ENCODE measurements at regions of chr4 and their contacts with region 1.

Region 1: GRCh38 chr4:174365018-174365587 is 81.4 kb downstream of the CEP44 start:
- DNase-seq: no peak
- H3K4me3 ChIP-seq: no peak overlapping the region
- H3K27ac ChIP-seq: no peak overlapping the region
- H3K4me1 ChIP-seq: no peaks in the 10 kb centered on the region
- H3K27me3 ChIP-seq: no peaks in the 10 kb centered on the region
- CTCF ChIP-seq: peak; percentile 46 to 62 (median 54)
- EP300 ChIP-seq: no peak
- POLR2A ChIP-seq: no peak

Region 2: GRCh38 chr4:173924561-173924960 is 440.5 kb before region 1 on chr4:
- in situ Hi-C with region 1: no loop called
- intact Hi-C with region 1: no loop called
- DNase-seq: no peak
- H3K4me3 ChIP-seq: no peak overlapping the region
- H3K27ac ChIP-seq: peak overlapping the region in 3 of 4 donors; percentile 31 to 64 (median 58)
- H3K4me1 ChIP-seq: peaks cover 0 to 10% (median 5%) of the 10 kb centered on the region in 4 donors
- H3K27me3 ChIP-seq: no peaks in the 10 kb centered on the region
- CTCF ChIP-seq: no peak
- EP300 ChIP-seq: no peak
- POLR2A ChIP-seq: no peak

Region 3: DNA sequence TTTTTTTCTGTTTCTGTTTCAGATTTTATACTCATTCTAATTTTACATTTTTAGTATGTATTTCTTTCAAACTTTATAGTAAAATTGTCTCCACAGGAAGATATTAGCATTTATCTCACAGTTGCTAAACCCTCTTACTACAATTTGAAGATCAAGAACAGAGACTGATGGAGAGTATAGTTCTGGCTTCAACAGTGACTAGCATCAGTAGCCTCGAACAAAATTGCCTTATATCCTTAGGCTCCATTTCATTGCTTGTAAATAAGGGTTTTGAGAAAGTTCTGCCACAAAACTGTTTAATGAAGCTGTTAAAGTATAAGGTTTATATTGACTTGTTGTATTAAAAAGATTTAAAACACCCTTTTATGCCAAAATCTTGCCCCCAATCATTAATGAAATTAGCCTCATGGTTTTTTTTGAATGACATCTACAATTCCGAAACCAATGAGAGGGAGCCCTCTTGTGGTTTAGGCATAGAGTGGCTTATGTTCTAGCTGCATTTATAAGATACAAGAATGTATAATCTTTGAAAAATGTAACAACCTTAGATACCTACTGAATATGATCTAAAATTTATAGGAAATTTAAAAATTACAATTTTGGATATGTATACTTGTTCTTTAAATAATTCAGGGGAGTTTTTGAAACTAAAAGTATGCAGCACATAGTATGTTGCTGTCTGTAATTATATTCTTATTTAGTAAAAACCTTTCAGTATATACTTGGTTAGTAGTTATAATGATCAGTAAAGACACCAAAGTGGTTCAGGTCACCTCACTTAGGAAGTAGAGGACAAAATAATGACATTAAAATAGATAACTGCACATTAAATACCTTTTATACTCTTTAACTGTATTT is 267.0 kb after region 1 on chr4:
- in situ Hi-C with region 1: loop called (anchors 5 to 10 kb)
- intact Hi-C with region 1: loop called (anchors 10 kb)
- DNase-seq: no peak
- H3K4me3 ChIP-seq: no peak overlapping the region
- H3K27ac ChIP-seq: no peak overlapping the region
- H3K4me1 ChIP-seq: peaks cover 0 to 11% (median 2%) of the 10 kb centered on the region in 4 donors
- H3K27me3 ChIP-seq: no peaks in the 10 kb centered on the region
- CTCF ChIP-seq: peak; percentile 72 to 82 (median 76)
- EP300 ChIP-seq: no peak
- POLR2A ChIP-seq: no peak

Region 4: DNA sequence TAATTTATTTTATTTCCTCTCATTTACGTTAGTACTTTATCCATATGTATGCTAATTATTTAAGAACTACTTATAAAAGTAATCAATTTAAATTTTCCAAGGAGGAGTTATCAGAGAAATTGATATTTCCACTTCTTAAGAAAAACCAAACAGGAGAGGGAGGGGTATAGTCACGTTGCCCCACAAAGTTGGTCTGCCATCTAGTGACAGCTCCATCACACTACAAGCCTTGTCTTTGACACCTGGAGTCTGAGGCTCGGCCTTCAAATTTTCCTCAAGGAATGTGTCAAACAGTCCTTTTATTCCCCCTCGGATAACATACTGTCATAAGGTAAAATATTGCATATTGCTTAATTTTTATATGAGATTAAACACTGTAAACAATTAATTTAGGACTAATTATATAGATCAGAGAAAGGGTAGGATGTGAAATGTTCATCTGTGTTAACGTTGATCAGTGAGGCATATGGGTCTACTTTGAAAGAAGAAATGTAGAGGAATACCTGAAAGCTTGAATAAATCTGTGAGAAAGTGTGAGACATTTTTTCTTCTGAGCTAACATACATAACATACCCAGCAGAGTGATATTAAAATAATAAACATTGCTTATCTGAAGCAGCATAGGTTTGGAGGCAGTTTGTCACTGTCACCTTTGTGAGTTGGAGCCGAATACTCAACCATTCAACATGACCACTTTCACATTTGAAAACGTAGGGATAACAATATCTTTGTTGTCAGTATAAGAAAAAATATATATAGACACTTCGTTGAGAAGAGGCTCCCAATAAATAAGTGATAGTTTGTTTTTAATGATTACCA is 349.5 kb after region 1 on chr4:
- in situ Hi-C with region 1: loop called in 1 of 4 experiments (anchors 10 kb)
- intact Hi-C with region 1: no loop called
- DNase-seq: peak; percentile 16
- H3K4me3 ChIP-seq: no peak overlapping the region
- H3K27ac ChIP-seq: no peak overlapping the region
- H3K4me1 ChIP-seq: no peaks in the 10 kb centered on the region
- H3K27me3 ChIP-seq: no peaks in the 10 kb centered on the region
- CTCF ChIP-seq: peak; percentile 49 to 64 (median 59)
- EP300 ChIP-seq: no peak
- POLR2A ChIP-seq: no peak

Region 5: GRCh38 chr4:175536852-175537453 is 1171.8 kb after region 1 on chr4:
- in situ Hi-C with region 1: loop called in 1 of 4 experiments (anchors 25 kb)
- intact Hi-C with region 1: no loop called
- DNase-seq: no peak
- H3K4me3 ChIP-seq: no peak overlapping the region
- H3K27ac ChIP-seq: no peak overlapping the region
- H3K4me1 ChIP-seq: no peaks in the 10 kb centered on the region
- H3K27me3 ChIP-seq: no peaks in the 10 kb centered on the region
- CTCF ChIP-seq: peak in 3 of 5 experiments; percentile 18 to 33 (median 26)
- EP300 ChIP-seq: no peak
- POLR2A ChIP-seq: no peak

Measured in transverse colon (tissue), 4 donors.